AG04450 (cell line): ENCODE measurements at regions of chr11 and their contacts with region 1.

Region 1: DNA sequence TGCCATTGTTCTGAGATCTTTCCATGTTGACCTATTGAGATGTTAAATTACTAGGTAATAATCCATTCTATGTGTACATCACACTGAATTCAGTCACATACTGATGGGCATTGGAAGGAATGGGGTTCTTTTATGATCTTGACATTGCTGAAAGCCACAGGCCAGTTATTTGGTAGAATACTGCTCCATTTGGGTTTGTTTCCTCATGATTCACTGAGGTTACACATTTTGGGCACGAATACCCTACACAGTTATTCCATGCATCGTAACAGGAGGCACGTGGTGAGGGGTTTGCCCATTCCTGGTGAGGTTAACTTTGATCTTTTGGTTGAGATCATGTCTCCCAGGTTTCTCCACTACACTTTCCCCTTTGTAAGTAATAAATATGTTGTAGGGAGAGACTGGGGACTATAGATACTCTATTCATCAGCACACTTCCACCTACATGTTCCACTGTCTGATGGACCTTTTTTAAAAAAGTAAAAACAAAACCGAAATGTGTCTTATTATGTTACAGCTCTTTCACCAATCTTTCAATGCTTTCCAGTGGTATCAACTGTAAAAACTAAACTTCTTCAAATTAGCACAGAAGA is 12.0 kb upstream of the FOLR1 start:
- DNase-seq: no peak
- H3K4me3 ChIP-seq: no peak overlapping the region
- H3K27ac ChIP-seq: no peak overlapping the region
- H3K27me3 ChIP-seq: no peaks in the 10 kb centered on the region
- CTCF ChIP-seq: no peak

Region 2: GRCh38 chr11:71977743-71978418 is 202.0 kb before region 1 on chr11:
- CTCF ChIA-PET with region 1: interaction called, 12 read pairs
- POLR2A ChIA-PET with region 1: no interaction called
- DNase-seq: no peak
- H3K4me3 ChIP-seq: no peak overlapping the region
- H3K27ac ChIP-seq: no peak overlapping the region
- H3K27me3 ChIP-seq: no peaks in the 10 kb centered on the region
- CTCF ChIP-seq: peak; percentile 72

Region 3: DNA sequence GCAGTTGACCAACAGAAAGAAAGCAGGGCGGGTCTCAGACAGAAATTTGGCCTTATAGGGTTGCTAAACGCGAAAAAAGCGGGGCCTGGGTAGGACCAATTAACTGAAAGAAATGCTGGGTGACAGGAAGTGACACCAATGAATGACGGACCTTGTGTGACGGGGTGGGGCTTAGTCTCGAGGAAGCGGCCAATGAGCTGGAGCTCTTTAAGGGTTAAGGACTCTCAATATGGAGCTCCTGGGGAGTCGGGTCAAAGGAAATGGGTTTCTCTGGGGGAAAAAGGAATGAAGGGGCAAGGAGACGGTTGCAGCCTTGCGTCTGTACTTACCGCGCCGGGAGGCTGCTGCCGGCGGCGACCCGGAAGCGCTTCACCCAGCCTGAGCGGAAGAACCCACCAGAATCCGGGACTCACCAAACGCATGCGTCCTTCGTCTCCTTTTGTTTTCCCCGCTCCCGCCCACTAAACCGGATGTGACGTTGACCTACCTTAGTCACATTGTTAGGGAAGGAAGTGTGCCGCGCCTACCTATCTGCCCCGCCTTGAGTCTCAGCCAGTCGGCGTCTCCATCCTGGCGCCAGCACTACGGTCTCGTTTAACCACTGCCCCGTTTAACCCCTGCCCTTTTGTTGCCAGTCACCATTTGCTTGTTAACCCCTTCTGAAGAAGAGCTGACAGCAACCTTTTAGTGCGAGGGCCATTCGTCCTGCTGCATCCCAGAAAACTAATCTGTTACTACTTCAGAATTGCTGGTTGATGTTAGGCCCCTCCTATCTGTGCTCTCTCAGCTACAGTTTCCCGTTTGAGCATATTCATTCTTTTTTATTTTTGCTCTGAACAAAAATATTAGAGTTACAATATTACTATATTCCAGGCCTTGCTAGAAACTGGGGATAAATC is 67.3 kb before region 1 on chr11 and contains the start of gene ANAPC15:
- CTCF ChIA-PET with region 1: interaction called, 12 read pairs
- POLR2A ChIA-PET with region 1: interaction called, 6 read pairs
- DNase-seq: peak; percentile 99
- H3K4me3 ChIP-seq: peak within 1 kb of the TSS; percentile 87
- H3K27ac ChIP-seq: peak within 1 kb of the TSS; percentile 99
- H3K27me3 ChIP-seq: no peaks in the 10 kb centered on the region
- CTCF ChIP-seq: no peak
- polyA plus RNA-seq, gene ANAPC15: 45.7 and 54.5 TPM in 2 replicates

Region 4: GRCh38 chr11:72160319-72160718 is 19.6 kb before region 1 on chr11:
- CTCF ChIA-PET with region 1: interaction called, 22 read pairs
- POLR2A ChIA-PET with region 1: no interaction called
- DNase-seq: no peak
- H3K4me3 ChIP-seq: no peak overlapping the region
- H3K27ac ChIP-seq: no peak overlapping the region
- H3K27me3 ChIP-seq: no peaks in the 10 kb centered on the region
- CTCF ChIP-seq: no peak

Region 5: GRCh38 chr11:72203163-72203562 is 23.3 kb after region 1 on chr11:
- CTCF ChIA-PET with region 1: interaction called, 14 read pairs
- POLR2A ChIA-PET with region 1: no interaction called
- DNase-seq: no peak
- H3K4me3 ChIP-seq: no peak overlapping the region
- H3K27ac ChIP-seq: no peak overlapping the region
- H3K27me3 ChIP-seq: peaks cover 6% of the 10 kb centered on the region
- CTCF ChIP-seq: no peak

Region 6: GRCh38 chr11:72222907-72223614 is 43.2 kb after region 1 on chr11:
- CTCF ChIA-PET with region 1: interaction called, 10 read pairs
- POLR2A ChIA-PET with region 1: no interaction called
- DNase-seq: peak; percentile 76
- H3K4me3 ChIP-seq: peak overlapping the region; percentile 83
- H3K27ac ChIP-seq: peak overlapping the region; percentile 65
- H3K27me3 ChIP-seq: peaks cover 7% of the 10 kb centered on the region
- CTCF ChIP-seq: peak; percentile 32; the same call in 1 of the 2 replicates

Region 7: GRCh38 chr11:72244361-72245262 is 64.7 kb after region 1 on chr11:
- CTCF ChIA-PET with region 1: no interaction called
- POLR2A ChIA-PET with region 1: no interaction called
- DNase-seq: no peak
- H3K4me3 ChIP-seq: peak overlapping the region; percentile 25
- H3K27ac ChIP-seq: no peak overlapping the region
- H3K27me3 ChIP-seq: peaks cover 79% of the 10 kb centered on the region
- CTCF ChIP-seq: no peak

Region 8: DNA sequence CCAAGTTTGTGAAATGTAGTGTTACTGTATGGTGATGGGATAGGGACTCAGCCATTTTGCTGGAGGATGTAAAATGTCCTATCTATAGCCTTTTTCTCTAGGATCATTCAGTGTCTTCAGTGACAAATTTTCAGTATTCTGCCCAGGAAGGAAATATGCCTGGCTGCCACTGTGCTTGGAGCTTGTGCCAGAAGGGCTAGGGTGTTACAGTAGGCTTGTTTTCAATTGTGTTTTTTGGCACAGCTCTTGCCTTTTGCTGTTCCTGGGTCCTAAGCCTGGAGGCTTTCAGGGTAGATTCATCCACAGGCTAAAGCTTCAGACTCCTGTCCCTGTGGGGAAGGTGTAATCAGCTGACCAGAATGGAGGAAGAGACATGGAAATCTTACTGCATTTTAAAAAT is 86.1 kb after region 1 on chr11:
- CTCF ChIA-PET with region 1: no interaction called
- POLR2A ChIA-PET with region 1: no interaction called
- DNase-seq: no peak
- H3K4me3 ChIP-seq: no peak overlapping the region
- H3K27ac ChIP-seq: no peak overlapping the region
- H3K27me3 ChIP-seq: no peaks in the 10 kb centered on the region
- CTCF ChIP-seq: no peak